H1 (cell line): ENCODE measurements at regions of chr19 and their contacts with region 1.

Region 1: DNA sequence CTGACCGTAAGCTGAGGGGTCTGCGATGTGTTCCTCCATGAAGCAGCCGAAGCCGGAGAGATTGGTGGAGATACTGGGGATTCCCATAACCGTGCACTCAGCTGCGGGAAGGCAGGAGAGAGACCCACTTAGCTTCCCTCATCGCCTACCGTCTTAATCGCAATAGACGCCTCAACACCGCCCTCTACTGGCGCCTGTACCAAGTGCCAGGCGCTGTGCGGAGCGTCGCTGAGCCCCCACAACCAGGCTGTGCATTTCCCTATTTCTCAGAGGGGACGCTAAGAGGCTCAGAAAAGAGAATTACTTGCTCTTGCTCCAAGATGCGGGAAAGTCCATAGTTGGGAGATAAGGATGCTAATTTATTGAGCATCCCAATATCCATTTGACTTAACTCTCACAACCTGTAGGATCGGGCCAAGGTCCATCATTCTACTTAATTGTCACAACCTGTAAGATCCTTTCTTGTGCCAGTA is 5.8 kb downstream of the FTL start:
- DNase-seq: peak in 1 of 2 experiments; percentile 96
- H3K4me3 ChIP-seq: no peak overlapping the region
- H3K27ac ChIP-seq: no peak overlapping the region
- H3K4me1 ChIP-seq: peaks cover 0 to 3% (median 1%) of the 10 kb centered on the region in 4 experiments; a peak in 4 of 7 replicates
- H3K27me3 ChIP-seq: no peaks in the 10 kb centered on the region
- CTCF ChIP-seq: peak; percentile 94 to 98 (median 95)
- EP300 ChIP-seq: no peak
- POLR2A ChIP-seq: no peak
- RAD21 ChIP-seq: peak; percentile 87 to 93

Region 2: GRCh38 chr19:48933382-48933932 is 37.5 kb before region 1 on chr19 and contains the start of gene DHDH:
- CTCF ChIA-PET with region 1: interaction called, 18 read pairs
- POLR2A ChIA-PET with region 1: interaction called, 29 read pairs
- DNase-seq: peak; percentile 92 to 97
- H3K4me3 ChIP-seq: peak within 1 kb of the TSS; percentile 2 to 58 (median 36); a peak in 7 of 8 replicates
- H3K27ac ChIP-seq: no peak within 1 kb of the TSS
- H3K4me1 ChIP-seq: peaks cover 3 to 8% (median 6%) of the 10 kb centered on the region in 4 experiments; a peak in 6 of 7 replicates
- H3K27me3 ChIP-seq: peaks cover 0 to 14% (median 10%) of the 10 kb centered on the region in 4 experiments; a peak in 5 of 7 replicates
- CTCF ChIP-seq: no peak
- EP300 ChIP-seq: no peak
- POLR2A ChIP-seq: peak in 1 of 2 experiments; percentile 73; a peak in 2 of 3 replicates
- RAD21 ChIP-seq: no peak
- total RNA-seq, gene DHDH: 2.2 and 2.7 TPM in 2 replicates

Region 3: DNA sequence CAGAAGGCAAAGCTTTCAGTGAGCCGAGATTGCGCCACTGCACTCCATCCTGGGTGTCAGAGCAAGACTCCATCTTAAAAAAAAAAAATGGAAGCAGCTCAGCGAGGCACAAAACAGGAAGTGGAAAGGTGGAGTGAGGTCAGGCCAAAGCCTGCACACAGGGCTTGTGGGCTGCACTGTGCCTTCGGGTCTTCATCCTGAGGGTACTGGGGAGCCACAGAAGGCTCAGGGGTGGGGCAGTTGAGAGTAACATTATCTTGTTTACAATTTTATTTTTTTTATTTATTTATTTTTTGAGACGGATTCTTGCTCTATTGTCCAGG is 11.1 kb before region 1 on chr19:
- CTCF ChIA-PET with region 1: interaction called, 11 read pairs
- POLR2A ChIA-PET with region 1: interaction called, 56 read pairs
- DNase-seq: no peak
- H3K4me3 ChIP-seq: no peak overlapping the region
- H3K27ac ChIP-seq: no peak overlapping the region
- H3K4me1 ChIP-seq: peaks cover 4 to 29% (median 17%) of the 10 kb centered on the region in 4 experiments
- H3K27me3 ChIP-seq: no peaks in the 10 kb centered on the region
- CTCF ChIP-seq: no peak
- EP300 ChIP-seq: no peak
- POLR2A ChIP-seq: no peak
- RAD21 ChIP-seq: no peak

Region 4: DNA sequence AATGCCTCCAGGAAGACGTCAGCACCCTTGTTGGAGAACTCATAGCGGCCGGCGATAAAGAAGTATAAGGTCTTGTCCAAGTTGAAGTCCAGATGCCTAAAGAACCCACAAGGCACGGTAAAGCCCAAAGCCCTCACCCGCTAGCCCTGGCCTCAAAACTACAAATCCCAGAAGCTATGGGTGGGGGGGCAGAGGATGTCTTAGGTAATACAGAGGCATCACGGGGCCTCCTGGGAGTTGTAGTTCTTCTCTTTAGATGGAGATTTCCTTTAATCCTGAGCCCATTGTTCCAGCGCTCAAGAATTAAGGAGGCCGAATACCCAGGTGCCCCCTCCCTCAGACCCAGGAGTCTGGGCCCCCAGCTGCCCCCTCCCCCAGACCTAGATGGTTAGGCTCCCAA is 11.3 kb after region 1 on chr19:
- CTCF ChIA-PET with region 1: interaction called, 13 read pairs
- POLR2A ChIA-PET with region 1: interaction called, 56 read pairs
- DNase-seq: no peak
- H3K4me3 ChIP-seq: no peak overlapping the region
- H3K27ac ChIP-seq: no peak overlapping the region
- H3K4me1 ChIP-seq: no peaks in the 10 kb centered on the region
- H3K27me3 ChIP-seq: no peaks in the 10 kb centered on the region
- CTCF ChIP-seq: no peak
- EP300 ChIP-seq: no peak
- POLR2A ChIP-seq: no peak
- RAD21 ChIP-seq: no peak

Region 5: GRCh38 chr19:48993175-48994034 is 22.4 kb after region 1 on chr19 and contains the starts of genes GYS1 and RUVBL2:
- CTCF ChIA-PET with region 1: interaction called, 19 read pairs
- POLR2A ChIA-PET with region 1: interaction called, 37 read pairs
- DNase-seq: peak; percentile 97 to 99
- H3K4me3 ChIP-seq: peak within 1 kb of the TSS; percentile 74 to 97 (median 92)
- H3K27ac ChIP-seq: peak within 1 kb of the TSS; percentile 63
- H3K4me1 ChIP-seq: peaks cover 0 to 3% (median 0%) of the 10 kb centered on the region in 4 experiments; a peak in 2 of 7 replicates
- H3K27me3 ChIP-seq: no peaks in the 10 kb centered on the region
- CTCF ChIP-seq: peak; percentile 78 to 92 (median 88)
- EP300 ChIP-seq: no peak
- POLR2A ChIP-seq: peak in 1 of 2 experiments; percentile 77; a peak in 2 of 3 replicates
- RAD21 ChIP-seq: peak in 1 of 2 experiments; percentile 8; a peak in 2 of 4 replicates
- total RNA-seq, gene GYS1: 37.8 and 38.7 TPM in 2 replicates
- total RNA-seq, gene RUVBL2: 152 and 160 TPM in 2 replicates